Ovary (tissue), 10 donors: ENCODE measurements at regions of chr5 and their contacts with region 1.

Region 1: DNA sequence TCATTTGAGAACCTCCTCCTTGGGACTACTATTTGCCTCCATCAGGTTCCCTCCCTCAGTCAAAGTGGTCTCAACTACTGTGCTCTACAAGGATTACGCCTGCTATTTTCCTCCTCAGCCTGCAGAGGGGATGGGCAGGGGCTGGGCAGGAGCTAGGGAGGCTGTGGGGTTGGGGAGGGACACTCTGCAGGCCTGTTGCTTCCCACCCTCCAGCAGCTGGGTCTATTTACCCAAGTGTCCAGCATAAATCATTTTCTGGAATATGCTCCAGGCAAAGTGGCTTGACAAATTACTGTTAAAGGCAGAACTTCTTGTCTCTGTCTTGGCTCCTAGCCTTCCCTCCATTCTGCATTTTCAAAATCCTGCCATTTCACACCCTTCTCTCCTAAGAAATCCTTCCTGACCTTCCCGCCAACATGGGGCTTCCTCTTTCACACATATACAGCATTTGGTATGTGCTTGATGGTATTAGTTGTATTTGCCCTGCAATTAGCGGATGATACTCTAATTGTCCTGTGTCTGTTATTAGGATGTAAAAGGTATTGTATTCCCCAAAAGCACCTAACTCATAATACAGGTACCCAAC is 106.7 kb downstream of the EFNA5 start:
- DNase-seq: no peak
- H3K4me3 ChIP-seq: no peak overlapping the region
- H3K27ac ChIP-seq: no peak overlapping the region
- H3K4me1 ChIP-seq: no peaks in the 10 kb centered on the region
- H3K27me3 ChIP-seq: no peaks in the 10 kb centered on the region
- CTCF ChIP-seq: no peak
- EP300 ChIP-seq: no peak
- POLR2A ChIP-seq: no peak

Region 2: DNA sequence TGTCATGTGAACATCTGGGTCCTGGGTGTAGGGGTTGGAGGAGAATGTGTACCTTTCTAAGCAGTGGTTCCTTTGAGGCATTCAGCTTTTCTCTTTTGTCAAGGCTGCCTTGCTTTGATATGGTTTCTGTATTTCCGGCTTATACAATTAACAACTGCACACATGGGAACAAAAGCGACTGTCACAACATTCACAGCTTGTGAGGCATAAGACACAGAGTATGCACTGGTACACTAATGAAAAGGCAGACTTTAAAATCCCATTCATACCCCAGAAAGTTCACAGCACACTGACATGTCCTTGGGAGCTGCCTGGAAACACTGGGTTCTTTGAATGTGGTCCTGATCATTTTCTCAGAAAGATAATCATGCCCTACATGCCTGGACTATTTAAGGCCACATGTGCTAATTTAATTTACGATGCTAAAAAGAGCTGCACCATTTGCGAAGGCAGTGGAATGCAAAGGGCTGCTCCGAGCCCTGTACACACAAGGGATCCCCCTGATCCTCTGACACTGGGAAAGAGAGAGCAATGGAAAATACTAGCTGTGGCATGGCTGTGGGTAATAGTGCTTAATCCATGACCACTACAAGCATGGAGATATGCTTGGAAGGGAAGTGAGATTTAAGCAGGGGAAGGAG is 25.1 kb before region 1 on chr5:
- intact Hi-C with region 1: loop called in 1 of 4 experiments (anchors 2 kb)
- DNase-seq: no peak
- H3K4me3 ChIP-seq: no peak overlapping the region
- H3K27ac ChIP-seq: no peak overlapping the region
- H3K4me1 ChIP-seq: peaks cover 7% of the 10 kb centered on the region
- H3K27me3 ChIP-seq: no peaks in the 10 kb centered on the region
- CTCF ChIP-seq: no peak
- EP300 ChIP-seq: no peak
- POLR2A ChIP-seq: no peak